ENCODE measurements at regions of chr7 and their contacts with region 1.

Region 1: DNA sequence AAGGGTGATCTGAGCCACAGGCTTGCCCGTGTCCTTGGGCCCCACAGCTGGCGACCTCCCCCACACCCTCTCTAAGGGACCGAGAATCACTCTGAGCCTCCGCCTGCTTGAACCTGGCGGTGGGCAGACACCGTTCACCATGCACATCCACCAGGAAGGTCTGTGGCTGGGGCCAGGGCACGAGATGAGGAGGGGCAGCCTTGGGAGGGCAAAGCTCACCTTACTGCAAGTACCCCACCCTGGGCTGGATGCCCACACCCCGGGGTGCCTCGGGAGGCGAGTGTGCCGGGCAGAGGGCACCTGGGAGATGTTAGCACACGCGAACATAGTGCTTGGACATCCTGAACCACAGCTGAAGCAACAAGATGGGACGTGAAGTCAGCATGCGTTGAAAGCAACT is 211.9 kb downstream of the ELFN1 start:
- DNase-seq: no peak
- H3K4me3 ChIP-seq: no peak overlapping the region
- H3K27me3 ChIP-seq: no peaks in the 10 kb centered on the region
- CTCF ChIP-seq: no peak

Region 2: GRCh38 chr7:1853986-1854865 is 27.7 kb before region 1 on chr7:
- CTCF ChIA-PET with region 1: no interaction called
- POLR2A ChIA-PET with region 1: no interaction called
- DNase-seq: no peak
- H3K4me3 ChIP-seq: no peak overlapping the region
- H3K27me3 ChIP-seq: no peaks in the 10 kb centered on the region
- CTCF ChIP-seq: no peak

Region 3: GRCh38 chr7:2214636-2215035 is 332.7 kb after region 1 on chr7:
- CTCF ChIA-PET with region 1: no interaction called
- POLR2A ChIA-PET with region 1: interaction called, 15 read pairs
- DNase-seq: no peak
- H3K4me3 ChIP-seq: no peak overlapping the region
- H3K27me3 ChIP-seq: no peaks in the 10 kb centered on the region
- CTCF ChIP-seq: no peak

Measured in BJ (cell line).